Cardiac septum (tissue), 1 donor: ENCODE measurements at regions of chr1 and their contacts with region 1.

Region 1: GRCh38 chr1:229479660-229480399 is 28.3 kb downstream of the NUP133 start:
- DNase-seq: no peak

Region 2: DNA sequence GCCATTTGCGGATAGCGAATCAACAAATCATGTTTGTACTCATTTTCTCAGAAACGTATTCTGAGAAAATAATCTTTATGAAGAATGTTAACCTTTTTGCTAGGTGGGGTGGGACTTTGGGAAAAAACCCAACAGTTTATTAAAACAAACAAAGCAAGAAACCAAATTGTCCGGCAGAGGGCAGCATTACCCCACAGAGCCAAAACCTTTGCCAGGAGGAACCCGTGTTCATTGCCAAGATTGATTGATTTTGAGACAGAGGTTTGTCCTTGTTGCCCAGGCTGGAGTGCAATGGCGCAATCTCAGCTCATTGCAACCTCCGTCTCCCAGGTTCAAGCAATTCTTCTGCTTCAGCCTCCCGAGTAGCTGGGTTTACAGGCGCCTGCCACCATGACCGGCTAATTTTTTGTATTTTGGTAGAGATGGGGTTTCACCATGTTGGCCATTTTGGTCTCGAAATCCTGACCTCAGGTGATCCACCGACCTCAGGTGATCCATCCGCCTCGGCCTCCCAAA is 815.4 kb before region 1 on chr1:
- intact Hi-C with region 1: loop called (anchors 5 kb)
- DNase-seq: peak; percentile 87

Region 3: DNA sequence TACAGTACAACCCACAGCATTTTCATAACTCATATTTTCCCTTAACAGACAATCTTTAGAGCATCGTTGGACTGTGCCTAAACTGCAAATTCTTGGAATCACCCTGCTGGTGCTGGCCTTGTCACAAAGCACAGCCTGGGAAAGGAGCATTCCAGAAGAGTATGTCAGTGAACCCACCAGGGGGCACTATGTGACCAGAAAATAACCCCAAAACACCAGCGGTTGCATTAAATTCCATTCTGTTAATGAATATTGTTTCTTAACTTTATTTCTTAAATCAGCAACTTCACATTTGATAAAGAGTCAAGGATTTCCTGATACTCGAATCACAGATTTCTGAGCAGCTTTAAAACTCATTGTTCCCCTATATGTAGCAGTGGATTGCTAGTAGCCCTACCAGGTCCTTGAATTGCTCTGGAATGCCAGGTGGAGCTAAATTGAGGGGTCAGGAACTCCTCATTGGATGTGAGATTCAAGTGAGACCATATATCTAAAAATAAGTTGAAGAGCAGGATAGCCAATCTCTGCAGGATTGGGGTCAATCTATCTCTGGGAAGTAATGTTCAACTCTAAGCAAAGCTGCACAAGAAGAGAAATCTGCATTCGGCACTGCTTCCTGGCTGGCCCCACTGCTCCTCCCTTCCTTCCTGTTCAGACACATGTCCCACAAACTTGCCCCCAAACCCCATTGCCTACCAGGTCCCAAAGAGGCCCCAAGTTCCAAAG is 221.6 kb before region 1 on chr1:
- intact Hi-C with region 1: loop called (anchors 2 kb)
- DNase-seq: no peak

Region 4: GRCh38 chr1:229264487-229264886 is 215.3 kb before region 1 on chr1:
- intact Hi-C with region 1: loop called (anchors 2 kb)
- DNase-seq: no peak

Region 5: DNA sequence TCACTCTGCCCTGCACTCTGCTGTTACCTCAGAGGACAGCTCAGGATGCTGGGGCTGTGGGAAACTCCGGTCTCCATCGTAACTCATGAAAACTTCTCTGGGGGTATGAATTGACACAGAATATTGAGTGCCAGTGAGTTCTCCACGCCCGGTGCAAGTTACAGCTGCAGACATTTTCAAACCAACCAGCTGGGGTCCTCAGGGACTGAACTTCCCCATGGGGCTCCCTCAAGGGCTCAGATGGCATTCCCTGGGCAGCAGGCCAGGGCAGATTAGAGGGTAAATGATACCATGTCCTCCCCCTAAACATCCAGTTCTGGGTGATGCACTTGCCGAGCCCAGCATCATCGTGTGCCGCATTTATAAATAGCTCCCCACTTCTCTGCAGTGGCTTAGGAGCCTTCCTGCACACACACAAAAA is 109.2 kb before region 1 on chr1:
- intact Hi-C with region 1: loop called (anchors 2 kb)
- DNase-seq: peak; percentile 86

Region 6: GRCh38 chr1:229407204-229408026 is 72.4 kb before region 1 on chr1:
- intact Hi-C with region 1: no loop called
- DNase-seq: no peak